Psoas muscle (tissue), 8 donors: ENCODE measurements at regions of chr6 and their contacts with region 1.

Region 1: GRCh38 chr6:90121982-90122381 is 174.7 kb downstream of the BACH2 start:
- DNase-seq: peak; percentile 49 to 74
- ATAC-seq: peak; percentile 99 to 100 (median 99)
- H3K4me3 ChIP-seq: no peak overlapping the region
- H3K27ac ChIP-seq: peak overlapping the region; percentile 87
- H3K4me1 ChIP-seq: peaks cover 42% of the 10 kb centered on the region
- H3K27me3 ChIP-seq: no peaks in the 10 kb centered on the region
- CTCF ChIP-seq: no peak

Region 2: GRCh38 chr6:90197854-90198496 is 76.0 kb after region 1 on chr6:
- intact Hi-C with region 1: loop called in 1 of 2 experiments (anchors 10 kb)
- DNase-seq: peak in 1 of 2 donors; percentile 64
- ATAC-seq: peak; percentile 76 to 95 (median 87)
- H3K4me3 ChIP-seq: no peak overlapping the region
- H3K27ac ChIP-seq: peak overlapping the region; percentile 73
- H3K4me1 ChIP-seq: peaks cover 73% of the 10 kb centered on the region
- H3K27me3 ChIP-seq: no peaks in the 10 kb centered on the region
- CTCF ChIP-seq: no peak

Region 3: GRCh38 chr6:90285611-90286381 is 163.8 kb after region 1 on chr6:
- intact Hi-C with region 1: loop called in 1 of 2 experiments (anchors 5 kb)
- DNase-seq: peak; percentile 82 to 92
- ATAC-seq: peak; percentile 97 to 99 (median 98)
- H3K4me3 ChIP-seq: peak overlapping the region; percentile 59
- H3K27ac ChIP-seq: peak overlapping the region; percentile 97
- H3K4me1 ChIP-seq: peaks cover 62% of the 10 kb centered on the region
- H3K27me3 ChIP-seq: no peaks in the 10 kb centered on the region
- CTCF ChIP-seq: no peak